ENCODE measurements at regions of chr1 and their contacts with region 1.

Region 1: DNA sequence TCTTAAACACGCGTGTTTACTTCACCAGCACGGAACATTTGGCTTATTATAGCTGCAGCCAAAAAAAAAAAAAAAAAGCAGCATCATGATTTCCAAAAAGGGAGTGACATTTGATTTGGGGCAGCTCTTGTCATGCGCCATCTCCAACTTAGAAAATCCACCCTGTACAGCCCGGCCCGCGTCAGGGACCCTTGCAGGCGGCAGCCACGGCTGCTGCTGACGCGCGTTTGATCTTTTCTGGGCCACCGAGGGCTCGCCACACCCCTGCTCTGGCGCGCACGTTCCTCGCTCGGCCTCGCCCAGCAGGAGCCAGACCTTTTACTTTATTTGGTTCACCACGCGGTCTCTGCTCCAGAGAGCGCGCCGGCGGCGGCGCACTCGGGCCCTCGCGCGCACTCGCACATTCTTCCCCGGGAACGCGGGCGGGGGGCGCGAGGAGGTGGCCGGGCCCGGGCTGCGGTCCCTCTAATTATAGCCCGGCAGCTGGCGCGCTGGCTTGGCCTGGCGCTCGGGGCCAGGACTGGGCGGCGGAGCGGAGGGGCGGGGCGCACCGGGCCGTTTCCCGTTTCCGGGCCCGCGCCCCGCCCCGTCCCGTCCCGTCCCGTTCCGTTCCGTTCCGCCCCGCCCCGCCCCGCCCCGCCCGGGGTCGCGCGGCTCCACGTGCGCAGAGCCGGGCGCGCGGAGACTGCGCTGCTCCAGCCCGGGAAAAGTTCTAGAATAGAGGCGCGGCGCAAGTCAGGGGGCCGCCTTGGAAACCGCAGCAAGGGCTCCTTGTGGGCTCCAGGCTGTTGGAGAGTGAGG is 10.2 kb downstream of the IRF2BP2 start:
- DNase-seq: peak; percentile 92 to 93
- H3K4me3 ChIP-seq: peak overlapping the region; percentile 59
- H3K4me3 Mint-ChIP-seq: peak overlapping the region; percentile 89
- H3K27ac Mint-ChIP-seq: peak overlapping the region; percentile 92
- H3K4me1 ChIP-seq: peaks cover 57% of the 10 kb centered on the region
- H3K4me1 Mint-ChIP-seq: peaks cover 23% of the 10 kb centered on the region
- H3K27me3 ChIP-seq: no peaks in the 10 kb centered on the region
- H3K27me3 Mint-ChIP-seq: no peaks in the 10 kb centered on the region
- CTCF ChIP-seq: no peak

Region 2: DNA sequence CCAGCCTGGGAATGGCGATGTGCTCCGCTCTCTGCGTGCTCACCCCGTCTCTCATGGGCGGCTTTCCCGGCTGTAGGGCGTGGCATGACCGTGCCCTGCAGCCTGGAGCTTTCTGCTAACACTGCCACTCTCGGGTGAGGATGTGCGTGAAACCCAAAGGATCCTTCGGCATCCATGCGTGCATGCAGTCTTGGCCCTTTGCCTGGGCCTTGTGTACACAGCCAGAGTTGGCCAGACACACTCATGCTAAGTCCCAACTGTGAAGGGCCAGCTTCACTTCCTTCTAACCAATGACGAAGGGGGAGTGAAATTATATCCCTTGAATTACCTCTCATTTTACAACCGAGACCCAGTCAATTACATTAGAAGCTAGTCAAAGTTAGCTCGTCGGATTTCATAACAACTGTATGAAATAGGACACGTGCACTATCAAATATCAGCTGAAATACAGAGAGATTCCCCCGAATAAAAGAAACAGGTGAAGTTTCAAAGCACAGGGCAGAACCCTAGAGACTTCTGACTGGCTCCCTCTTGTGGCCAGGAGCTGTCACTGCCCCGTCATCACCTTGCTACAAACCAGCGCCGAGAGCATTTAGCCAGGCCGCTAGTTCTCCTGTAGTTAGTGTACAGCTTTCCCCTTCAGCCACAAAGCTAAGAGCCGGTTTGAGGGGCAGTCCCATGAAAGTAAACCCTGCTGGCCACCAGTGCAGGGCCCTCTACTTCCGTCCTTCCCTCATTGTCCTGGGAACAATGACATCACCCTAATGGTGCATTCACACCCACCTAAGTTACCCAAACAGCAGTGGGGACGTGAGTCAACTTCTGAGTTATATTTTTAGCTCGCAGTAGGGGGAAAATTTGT is 290.0 kb before region 1 on chr1:
- CTCF ChIA-PET with region 1: no interaction called
- POLR2A ChIA-PET with region 1: no interaction called
- intact Hi-C with region 1: no loop called
- DNase-seq: peak; percentile 70 to 72
- H3K4me3 ChIP-seq: peak overlapping the region; percentile 21
- H3K4me3 Mint-ChIP-seq: peak overlapping the region; percentile 72
- H3K27ac Mint-ChIP-seq: no peak overlapping the region
- H3K4me1 ChIP-seq: peaks cover 5% of the 10 kb centered on the region; the same call in 1 of the 2 replicates
- H3K4me1 Mint-ChIP-seq: no peaks in the 10 kb centered on the region
- H3K27me3 ChIP-seq: no peaks in the 10 kb centered on the region
- H3K27me3 Mint-ChIP-seq: peaks cover 10% of the 10 kb centered on the region
- CTCF ChIP-seq: peak; percentile 96 to 97

Region 3: DNA sequence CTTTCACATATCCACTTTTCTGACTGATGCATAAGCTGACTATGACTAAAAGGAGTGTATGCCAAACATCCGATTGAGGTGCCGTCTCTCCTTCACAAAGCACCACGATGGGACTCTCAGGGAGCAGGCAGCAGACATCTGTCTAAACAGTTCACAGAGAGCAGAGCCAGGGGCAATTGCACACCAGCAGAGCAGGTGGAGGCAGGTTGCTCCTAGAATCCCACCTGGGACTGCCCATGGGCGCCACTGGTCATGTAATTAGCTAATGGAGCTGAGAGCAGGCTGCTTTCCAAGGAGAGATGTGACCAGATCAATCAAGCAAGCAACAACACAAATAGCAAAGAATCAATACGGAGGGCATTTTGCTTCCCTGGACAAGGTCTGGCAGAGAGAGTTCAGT is 257.0 kb before region 1 on chr1:
- CTCF ChIA-PET with region 1: no interaction called
- POLR2A ChIA-PET with region 1: no interaction called
- intact Hi-C with region 1: no loop called
- DNase-seq: no peak
- H3K4me3 ChIP-seq: no peak overlapping the region
- H3K4me3 Mint-ChIP-seq: no peak overlapping the region
- H3K27ac Mint-ChIP-seq: no peak overlapping the region
- H3K4me1 ChIP-seq: no peaks in the 10 kb centered on the region
- H3K4me1 Mint-ChIP-seq: no peaks in the 10 kb centered on the region
- H3K27me3 ChIP-seq: no peaks in the 10 kb centered on the region
- H3K27me3 Mint-ChIP-seq: peaks cover 9% of the 10 kb centered on the region
- CTCF ChIP-seq: no peak

Region 4: DNA sequence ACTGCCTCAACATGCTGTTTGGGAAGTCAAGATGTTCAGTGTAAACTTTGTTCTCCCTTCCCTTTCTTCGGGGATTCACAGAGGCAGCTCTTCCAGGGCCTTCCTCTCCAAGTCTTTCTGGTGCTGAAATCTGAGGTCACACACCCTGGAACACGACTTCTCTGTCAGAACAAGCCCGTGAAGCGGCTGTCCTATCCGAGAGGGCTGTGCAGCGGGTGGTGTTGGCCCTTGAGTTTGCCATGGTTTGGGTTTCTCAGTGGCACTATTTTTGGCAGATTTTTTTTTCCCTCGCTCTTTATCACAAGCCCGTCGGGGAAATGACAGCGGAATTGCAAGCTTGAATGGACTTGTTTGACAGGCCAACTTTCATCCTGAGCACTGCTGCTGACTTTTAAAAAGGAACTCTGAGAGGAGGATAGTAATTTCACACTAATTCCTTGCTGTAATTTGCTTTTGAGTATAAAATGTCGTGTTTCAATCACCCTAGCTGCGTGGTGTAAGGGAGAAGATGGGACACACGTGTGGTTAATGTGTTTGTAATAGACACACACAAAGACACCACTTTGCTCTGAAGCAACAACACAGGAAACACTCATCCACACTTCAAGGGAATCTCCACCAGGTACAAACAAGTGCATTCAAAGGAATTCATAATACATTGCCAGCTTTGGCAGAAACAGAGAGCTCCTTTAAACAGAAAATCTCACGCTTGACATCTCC is 60.7 kb before region 1 on chr1:
- CTCF ChIA-PET with region 1: no interaction called
- POLR2A ChIA-PET with region 1: no interaction called
- intact Hi-C with region 1: loop called (anchors 2 kb)
- DNase-seq: no peak
- H3K4me3 ChIP-seq: no peak overlapping the region
- H3K4me3 Mint-ChIP-seq: no peak overlapping the region
- H3K27ac Mint-ChIP-seq: peak overlapping the region; percentile 83
- H3K4me1 ChIP-seq: peaks cover 55% of the 10 kb centered on the region
- H3K4me1 Mint-ChIP-seq: peaks cover 36% of the 10 kb centered on the region
- H3K27me3 ChIP-seq: no peaks in the 10 kb centered on the region
- H3K27me3 Mint-ChIP-seq: no peaks in the 10 kb centered on the region
- CTCF ChIP-seq: no peak

Region 5: DNA sequence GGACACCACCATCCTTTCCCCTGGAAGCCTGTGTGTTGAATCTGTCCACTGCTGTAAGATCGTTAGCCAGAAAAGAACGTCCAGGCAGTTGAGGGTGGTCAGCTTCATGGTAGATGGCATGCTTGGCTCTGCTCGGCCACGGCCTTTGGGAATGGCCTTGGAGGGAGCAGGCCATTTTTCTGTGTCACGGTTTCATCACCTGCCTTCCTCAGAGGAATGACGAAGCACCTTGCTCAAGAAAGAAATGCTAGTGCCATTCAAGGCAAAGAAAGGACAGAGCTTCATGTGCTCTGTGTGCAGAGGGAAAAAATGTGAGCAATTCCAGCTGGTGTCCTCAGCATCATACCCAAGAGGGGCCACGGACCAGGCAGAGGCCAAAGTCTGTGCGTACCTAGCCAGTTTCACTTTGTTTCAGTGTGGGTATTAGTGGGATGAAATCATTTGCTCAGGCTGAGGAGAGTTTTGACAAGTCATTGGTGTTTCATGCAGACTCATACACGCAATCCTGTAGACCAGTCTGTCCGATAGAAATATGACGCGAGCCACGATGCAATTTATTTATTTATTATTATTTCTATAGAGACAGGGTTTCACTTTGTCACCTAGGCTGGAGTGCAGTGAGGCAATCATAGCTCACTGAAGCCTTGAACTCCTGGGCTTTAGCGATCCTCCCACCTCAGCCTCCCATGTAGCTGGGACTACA is 53.8 kb before region 1 on chr1:
- CTCF ChIA-PET with region 1: interaction called, 6 read pairs
- POLR2A ChIA-PET with region 1: interaction called, 9 read pairs
- intact Hi-C with region 1: loop called (anchors 1 kb)
- DNase-seq: peak; percentile 88 to 90
- H3K4me3 ChIP-seq: no peak overlapping the region
- H3K4me3 Mint-ChIP-seq: no peak overlapping the region
- H3K27ac Mint-ChIP-seq: peak overlapping the region; percentile 48
- H3K4me1 ChIP-seq: peaks cover 39% of the 10 kb centered on the region
- H3K4me1 Mint-ChIP-seq: peaks cover 32% of the 10 kb centered on the region
- H3K27me3 ChIP-seq: no peaks in the 10 kb centered on the region
- H3K27me3 Mint-ChIP-seq: no peaks in the 10 kb centered on the region
- CTCF ChIP-seq: no peak

Region 6: DNA sequence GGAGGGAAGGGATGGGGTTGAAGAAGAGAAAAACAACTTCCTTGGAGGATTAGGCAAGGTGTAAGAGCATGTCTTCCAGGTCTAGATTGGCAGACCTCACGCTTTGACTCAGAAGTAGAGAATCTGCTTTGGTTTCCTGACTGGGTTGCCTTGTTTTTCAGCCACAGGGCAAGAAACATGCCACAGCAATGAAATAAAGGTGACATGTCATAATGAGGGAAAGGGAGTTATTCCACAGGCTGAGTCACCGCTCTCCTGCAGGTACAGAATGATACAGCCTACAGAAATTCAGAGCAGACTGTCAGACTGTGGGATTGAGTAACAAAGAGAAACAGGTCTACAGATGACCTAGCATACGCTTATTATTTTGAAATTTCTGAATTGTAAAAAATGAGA is 35.2 kb before region 1 on chr1:
- CTCF ChIA-PET with region 1: interaction called, 5 read pairs
- POLR2A ChIA-PET with region 1: no interaction called
- intact Hi-C with region 1: loop called (anchors 2 kb)
- DNase-seq: peak; percentile 49
- H3K4me3 ChIP-seq: no peak overlapping the region
- H3K4me3 Mint-ChIP-seq: no peak overlapping the region
- H3K27ac Mint-ChIP-seq: peak overlapping the region; percentile 15
- H3K4me1 ChIP-seq: peaks cover 42% of the 10 kb centered on the region
- H3K4me1 Mint-ChIP-seq: peaks cover 24% of the 10 kb centered on the region
- H3K27me3 ChIP-seq: no peaks in the 10 kb centered on the region
- H3K27me3 Mint-ChIP-seq: no peaks in the 10 kb centered on the region
- CTCF ChIP-seq: no peak

Measured in Caco-2 (cell line).